Adrenal gland (tissue), 19 donors: ENCODE measurements at regions of chr17 and their contacts with region 1.

Region 1: GRCh38 chr17:15944759-15945529 is at the start of gene ADORA2B:
- DNase-seq: peak; percentile 52 to 67 (median 61)
- H3K4me3 ChIP-seq: peak within 1 kb of the TSS in 2 of 4 donors; percentile 43 to 60
- H3K27ac ChIP-seq: peak within 1 kb of the TSS in 1 of 5 donors; percentile 7
- H3K4me1 ChIP-seq: peaks cover 11 to 22% of the 10 kb centered on the region in 2 donors
- H3K27me3 ChIP-seq: no peaks in the 10 kb centered on the region
- CTCF ChIP-seq: peak in 4 of 6 experiments; percentile 12 to 55 (median 48)
- POLR2A ChIP-seq: no peak
- total RNA-seq, gene ADORA2B: 0.39 to 4.0 (median 2.2) TPM

Region 2: DNA sequence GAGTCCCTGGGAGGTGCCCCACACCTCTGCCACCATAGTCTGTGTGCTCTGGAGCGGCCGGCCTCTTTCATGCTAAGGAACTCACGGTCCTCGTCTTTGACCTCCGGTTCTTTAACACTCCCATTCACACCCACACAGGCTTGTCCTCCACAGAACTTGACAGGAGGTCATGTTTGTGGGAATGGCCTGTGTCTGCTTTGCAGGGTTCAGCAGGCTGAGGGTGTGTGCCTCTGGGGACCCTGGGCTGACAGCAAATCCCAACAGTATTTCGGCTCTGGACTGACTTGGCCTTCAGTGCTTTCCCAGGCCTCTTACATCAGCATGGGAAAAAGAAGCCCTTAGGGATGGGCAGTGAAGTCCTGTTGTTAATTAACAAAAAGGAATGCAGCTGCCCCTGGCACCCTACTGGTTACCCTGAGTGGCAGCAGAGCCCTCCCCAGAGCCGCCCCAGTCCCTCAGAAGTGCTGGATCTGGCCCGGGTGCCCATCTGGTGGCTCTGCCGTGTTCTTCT is 35.4 kb before region 1 on chr17:
- intact Hi-C with region 1: no loop called
- DNase-seq: no peak
- H3K4me3 ChIP-seq: no peak overlapping the region
- H3K27ac ChIP-seq: no peak overlapping the region
- H3K4me1 ChIP-seq: no peaks in the 10 kb centered on the region
- H3K27me3 ChIP-seq: no peaks in the 10 kb centered on the region
- CTCF ChIP-seq: no peak
- POLR2A ChIP-seq: no peak

Region 3: GRCh38 chr17:15999439-16000350 is 54.8 kb after region 1 on chr17 and contains the starts of genes TTC19 and ZSWIM7:
- intact Hi-C with region 1: loop called in 1 of 2 experiments (anchors 10 kb)
- DNase-seq: peak; percentile 97 to 99 (median 98)
- H3K4me3 ChIP-seq: peak within 1 kb of the TSS; percentile 27 to 84 (median 70)
- H3K27ac ChIP-seq: peak within 1 kb of the TSS; percentile 96 to 99 (median 98)
- H3K4me1 ChIP-seq: peaks cover 13 to 20% of the 10 kb centered on the region in 2 donors
- H3K27me3 ChIP-seq: no peaks in the 10 kb centered on the region
- CTCF ChIP-seq: peak in 1 of 6 experiments; percentile 18
- POLR2A ChIP-seq: peak; percentile 98 to 99
- total RNA-seq, gene TTC19: 46.0 to 152 (median 52.2) TPM
- total RNA-seq, gene ZSWIM7: 10.3 to 72.6 (median 34.3) TPM